B cell (primary cell): ENCODE measurements at regions of chr2 and their contacts with region 1.

Region 1: GRCh38 chr2:207710814-207711740 is at the start of gene CCNYL1:
- DNase-seq: peak; percentile 99
- ATAC-seq: peak; percentile 94
- H3K4me3 ChIP-seq: peak within 1 kb of the TSS; percentile 81 to 98 (median 93)
- H3K4me3 Mint-ChIP-seq: peak within 1 kb of the TSS; percentile 91
- H3K27ac ChIP-seq: peak within 1 kb of the TSS; percentile 78 to 83
- H3K27ac Mint-ChIP-seq: peak within 1 kb of the TSS; percentile 88
- H3K4me1 ChIP-seq: peaks cover 17 to 19% of the 10 kb centered on the region in 2 donors
- H3K4me1 Mint-ChIP-seq: peaks cover 23% of the 10 kb centered on the region
- H3K27me3 ChIP-seq: no peaks in the 10 kb centered on the region
- H3K27me3 Mint-ChIP-seq: no peaks in the 10 kb centered on the region
- CTCF ChIP-seq: no peak
- total RNA-seq, gene CCNYL1: 14.2 and 15.1 TPM in 2 replicates

Region 2: GRCh38 chr2:206765242-206766056 is 945.6 kb before region 1 on chr2 and contains the starts of genes FASTKD2 and MDH1B:
- CTCF ChIA-PET with region 1: no interaction called
- POLR2A ChIA-PET with region 1: interaction called, 4 read pairs
- intact Hi-C with region 1: loop called (anchors 1 kb)
- DNase-seq: peak; percentile 96
- ATAC-seq: peak; percentile 85
- H3K4me3 ChIP-seq: peak within 1 kb of the TSS; percentile 63 to 96 (median 87)
- H3K4me3 Mint-ChIP-seq: peak within 1 kb of the TSS; percentile 99
- H3K27ac ChIP-seq: peak within 1 kb of the TSS; percentile 77 to 92
- H3K27ac Mint-ChIP-seq: peak within 1 kb of the TSS; percentile 97
- H3K4me1 ChIP-seq: peaks cover 14% of the 10 kb centered on the region in 2 donors
- H3K4me1 Mint-ChIP-seq: peaks cover 32% of the 10 kb centered on the region
- H3K27me3 ChIP-seq: peaks cover 0 to 17% (median 6%) of the 10 kb centered on the region in 4 experiments
- H3K27me3 Mint-ChIP-seq: no peaks in the 10 kb centered on the region
- CTCF ChIP-seq: no peak
- total RNA-seq, gene FASTKD2: 20.6 and 24.5 TPM in 2 replicates
- total RNA-seq, gene MDH1B: 0.34 TPM in 1 of 2 replicates, not detected in the other

Region 3: GRCh38 chr2:207662203-207662602 is 48.9 kb before region 1 on chr2:
- CTCF ChIA-PET with region 1: interaction called, 4 read pairs
- POLR2A ChIA-PET with region 1: interaction called, 3 read pairs
- intact Hi-C with region 1: loop called (anchors 1 kb)
- DNase-seq: peak; percentile 94
- ATAC-seq: peak; percentile 96
- H3K4me3 ChIP-seq: peak overlapping the region in 4 of 5 experiments; percentile 1 to 67 (median 44)
- H3K4me3 Mint-ChIP-seq: peak overlapping the region; percentile 87
- H3K27ac ChIP-seq: peak overlapping the region; percentile 79 to 98
- H3K27ac Mint-ChIP-seq: peak overlapping the region; percentile 97
- H3K4me1 ChIP-seq: peaks cover 44 to 58% of the 10 kb centered on the region in 2 donors
- H3K4me1 Mint-ChIP-seq: peaks cover 65% of the 10 kb centered on the region
- H3K27me3 ChIP-seq: no peaks in the 10 kb centered on the region
- H3K27me3 Mint-ChIP-seq: no peaks in the 10 kb centered on the region
- CTCF ChIP-seq: no peak

Region 4: DNA sequence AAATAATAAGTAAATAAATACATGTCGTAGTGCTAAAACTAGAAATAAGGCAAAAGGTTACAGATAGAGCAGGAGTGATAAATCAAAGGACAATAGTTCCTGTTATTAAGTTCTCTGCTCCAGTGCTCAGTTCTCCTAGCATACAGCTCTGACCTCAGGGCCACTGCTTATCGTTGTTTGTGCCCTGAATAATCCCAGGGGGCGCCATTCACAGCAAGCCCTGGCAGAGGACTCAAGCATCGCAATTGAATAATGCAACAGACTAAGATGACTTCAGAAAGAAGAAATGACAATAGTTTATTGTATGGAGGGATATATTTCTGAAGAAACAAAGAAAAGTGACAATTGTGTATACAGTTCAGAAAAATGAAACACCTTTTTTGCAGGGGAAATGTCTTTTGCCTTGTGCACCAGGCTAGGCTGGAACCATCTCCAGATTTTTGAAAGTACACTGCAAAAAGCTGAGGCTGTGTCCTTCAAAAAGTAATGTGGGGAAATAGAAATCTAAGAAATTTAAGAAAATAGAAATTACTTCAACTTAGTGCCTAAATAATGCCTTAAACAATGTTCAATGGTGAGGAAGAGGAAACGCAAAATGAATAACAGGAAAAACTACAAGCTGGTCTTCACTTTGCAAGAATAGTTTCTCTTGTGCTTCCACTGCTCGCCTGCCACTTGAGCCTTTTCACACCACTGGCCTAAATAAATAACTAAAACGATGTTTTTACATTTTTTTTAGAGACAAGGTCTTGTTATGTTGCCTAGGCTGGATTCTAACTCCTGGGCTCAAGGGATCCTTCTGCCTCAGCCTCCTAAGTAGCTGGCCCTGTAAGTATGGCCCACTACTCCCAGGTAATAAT is 18.6 kb before region 1 on chr2:
- CTCF ChIA-PET with region 1: interaction called, 12 read pairs
- POLR2A ChIA-PET with region 1: no interaction called
- intact Hi-C with region 1: no loop called
- DNase-seq: peak; percentile 68
- ATAC-seq: peak; percentile 66
- H3K4me3 ChIP-seq: no peak overlapping the region
- H3K4me3 Mint-ChIP-seq: no peak overlapping the region
- H3K27ac ChIP-seq: no peak overlapping the region
- H3K27ac Mint-ChIP-seq: no peak overlapping the region
- H3K4me1 ChIP-seq: peaks cover 5 to 8% of the 10 kb centered on the region in 2 donors
- H3K4me1 Mint-ChIP-seq: peaks cover 4% of the 10 kb centered on the region
- H3K27me3 ChIP-seq: no peaks in the 10 kb centered on the region
- H3K27me3 Mint-ChIP-seq: no peaks in the 10 kb centered on the region
- CTCF ChIP-seq: peak; percentile 70

Region 5: GRCh38 chr2:207758025-207758424 is 46.9 kb after region 1 on chr2:
- CTCF ChIA-PET with region 1: no interaction called
- POLR2A ChIA-PET with region 1: no interaction called
- intact Hi-C with region 1: no loop called
- DNase-seq: no peak
- ATAC-seq: no peak
- H3K4me3 ChIP-seq: no peak overlapping the region
- H3K4me3 Mint-ChIP-seq: no peak overlapping the region
- H3K27ac ChIP-seq: no peak overlapping the region
- H3K27ac Mint-ChIP-seq: no peak overlapping the region
- H3K4me1 ChIP-seq: peaks cover 0 to 4% of the 10 kb centered on the region in 2 donors
- H3K4me1 Mint-ChIP-seq: peaks cover 9% of the 10 kb centered on the region
- H3K27me3 ChIP-seq: no peaks in the 10 kb centered on the region
- H3K27me3 Mint-ChIP-seq: no peaks in the 10 kb centered on the region
- CTCF ChIP-seq: no peak

Region 6: DNA sequence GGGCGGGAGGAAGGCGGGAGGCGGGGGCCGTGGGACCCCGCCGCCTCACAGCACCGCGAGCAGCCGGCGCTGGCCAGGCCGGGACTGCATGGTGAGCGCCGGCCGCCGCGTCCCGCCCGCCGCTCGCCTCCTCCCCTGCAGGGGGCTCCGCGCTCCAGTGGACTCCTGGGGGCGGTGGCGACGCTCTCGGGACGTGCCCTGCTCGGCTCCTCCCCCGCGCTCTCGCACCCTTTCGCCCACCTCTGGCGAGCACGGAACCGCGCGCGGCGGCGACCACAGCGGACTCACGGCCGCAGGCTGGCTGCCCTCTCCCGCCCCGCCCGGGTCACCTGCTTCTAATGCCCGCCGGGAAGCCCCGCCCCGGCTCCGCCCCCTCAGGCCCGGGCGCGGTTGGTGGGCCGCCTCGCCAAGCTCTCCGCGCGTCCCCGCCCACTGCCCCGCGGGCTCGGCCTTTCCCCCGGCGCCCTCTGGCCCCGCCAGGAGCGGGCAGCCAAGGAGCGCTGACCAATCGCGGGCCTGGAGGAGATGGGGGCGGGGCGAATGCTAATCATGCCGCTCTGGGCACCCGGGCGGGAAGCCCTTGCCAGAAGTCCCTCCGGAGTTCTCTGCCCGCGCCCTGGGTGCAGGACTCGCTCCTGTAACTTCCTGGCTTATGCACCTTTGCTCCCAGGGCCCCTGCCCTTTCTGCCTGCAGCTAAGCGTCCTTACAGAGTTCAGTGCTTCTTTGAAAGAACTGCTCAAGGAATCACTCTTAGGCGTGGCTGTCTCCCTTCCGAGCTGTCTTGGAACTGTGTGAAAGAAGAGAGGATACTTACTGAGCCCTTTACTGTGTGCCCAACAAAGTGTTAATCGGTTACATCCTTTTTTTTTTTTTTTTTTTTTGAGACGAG is 58.8 kb after region 1 on chr2 and contains the start of gene FZD5:
- CTCF ChIA-PET with region 1: no interaction called
- POLR2A ChIA-PET with region 1: no interaction called
- intact Hi-C with region 1: loop called (anchors 1 kb)
- DNase-seq: peak; percentile 89
- ATAC-seq: peak; percentile 88
- H3K4me3 ChIP-seq: peak within 1 kb of the TSS; percentile 55 to 87 (median 65)
- H3K4me3 Mint-ChIP-seq: peak within 1 kb of the TSS; percentile 89
- H3K27ac ChIP-seq: no peak within 1 kb of the TSS
- H3K27ac Mint-ChIP-seq: peak within 1 kb of the TSS; percentile 80
- H3K4me1 ChIP-seq: peaks cover 32 to 44% of the 10 kb centered on the region in 2 donors
- H3K4me1 Mint-ChIP-seq: peaks cover 36% of the 10 kb centered on the region
- H3K27me3 ChIP-seq: peaks cover 0 to 15% (median 4%) of the 10 kb centered on the region in 4 experiments
- H3K27me3 Mint-ChIP-seq: peaks cover 6% of the 10 kb centered on the region
- CTCF ChIP-seq: peak; percentile 33
- total RNA-seq, gene FZD5: 1.8 and 2.5 TPM in 2 replicates

Region 7: DNA sequence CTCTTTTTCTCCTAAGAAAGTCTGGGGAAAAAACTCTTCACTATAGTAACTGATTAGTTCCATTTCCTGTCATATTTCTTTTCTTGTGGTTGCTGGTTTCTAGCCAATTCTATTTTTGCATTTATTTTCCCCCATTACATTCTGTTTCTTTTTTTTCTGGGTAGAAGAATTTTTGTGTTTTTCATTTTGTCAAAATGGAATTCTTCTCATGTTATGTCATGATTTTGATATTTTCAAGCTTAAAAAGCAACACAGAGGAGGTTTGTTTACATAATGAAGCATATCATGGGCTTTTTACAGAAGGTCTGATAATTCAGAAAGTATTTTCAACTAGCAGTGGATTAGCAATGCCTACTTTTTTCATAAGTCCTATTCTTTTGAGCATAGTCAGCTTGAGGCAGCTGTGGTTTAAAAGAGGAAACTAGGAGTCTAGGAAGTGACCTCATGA is 1814.8 kb after region 1 on chr2:
- CTCF ChIA-PET with region 1: no interaction called
- POLR2A ChIA-PET with region 1: interaction called, 11 read pairs
- intact Hi-C with region 1: no loop called
- DNase-seq: peak; percentile 19
- ATAC-seq: peak; percentile 21
- H3K4me3 ChIP-seq: peak overlapping the region in 4 of 5 experiments; percentile 28 to 59 (median 42)
- H3K4me3 Mint-ChIP-seq: peak overlapping the region; percentile 74
- H3K27ac ChIP-seq: peak overlapping the region; percentile 67 to 76
- H3K27ac Mint-ChIP-seq: peak overlapping the region; percentile 80
- H3K4me1 ChIP-seq: peaks cover 37 to 42% of the 10 kb centered on the region in 2 donors
- H3K4me1 Mint-ChIP-seq: peaks cover 41% of the 10 kb centered on the region
- H3K27me3 ChIP-seq: no peaks in the 10 kb centered on the region
- H3K27me3 Mint-ChIP-seq: no peaks in the 10 kb centered on the region
- CTCF ChIP-seq: no peak